ENCODE measurements at regions of chr13 and their contacts with region 1.

Region 1: GRCh38 chr13:40682449-40683240 is 16.2 kb upstream of the FOXO1 start:
- DNase-seq: no peak
- H3K4me3 Mint-ChIP-seq: no peak overlapping the region
- H3K27ac Mint-ChIP-seq: no peak overlapping the region
- H3K4me1 Mint-ChIP-seq: peaks cover 12% of the 10 kb centered on the region
- H3K27me3 Mint-ChIP-seq: no peaks in the 10 kb centered on the region

Region 2: DNA sequence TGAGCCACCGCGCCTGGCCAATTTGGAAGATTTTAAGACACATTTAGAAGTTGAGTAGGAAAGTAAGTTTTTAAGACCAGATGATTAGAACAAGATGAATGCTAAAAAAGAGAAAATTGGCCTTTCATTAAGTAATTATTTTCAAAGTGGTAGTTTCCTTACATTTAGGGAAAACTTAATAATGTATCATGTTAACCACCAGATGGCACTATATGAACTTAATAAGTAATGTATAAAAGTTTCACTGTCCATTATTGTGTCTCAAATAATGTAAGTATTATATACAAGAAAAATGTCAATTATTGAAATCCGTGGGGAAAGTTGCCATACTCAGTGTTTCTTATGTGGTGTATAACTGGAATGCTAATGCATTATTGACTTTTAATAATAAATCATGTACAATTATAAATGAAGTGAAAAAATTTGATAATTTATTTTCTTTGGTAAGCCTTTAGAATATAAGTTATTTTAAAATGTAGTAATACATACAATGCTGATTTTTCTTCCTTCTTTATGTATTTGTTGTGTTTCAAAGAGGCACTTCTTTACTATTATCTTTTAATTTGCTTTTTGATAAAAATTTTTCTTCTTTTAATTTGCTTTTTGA is 998.0 kb before region 1 on chr13:
- CTCF ChIA-PET with region 1: interaction called, 7 read pairs
- intact Hi-C with region 1: loop called (anchors 1 kb)
- DNase-seq: no peak
- H3K4me3 Mint-ChIP-seq: no peak overlapping the region
- H3K27ac Mint-ChIP-seq: no peak overlapping the region
- H3K4me1 Mint-ChIP-seq: peaks cover 16% of the 10 kb centered on the region
- H3K27me3 Mint-ChIP-seq: no peaks in the 10 kb centered on the region

Region 3: GRCh38 chr13:39783050-39783449 is 899.6 kb before region 1 on chr13:
- CTCF ChIA-PET with region 1: interaction called, 14 read pairs
- intact Hi-C with region 1: no loop called
- DNase-seq: no peak
- H3K4me3 Mint-ChIP-seq: no peak overlapping the region
- H3K27ac Mint-ChIP-seq: no peak overlapping the region
- H3K4me1 Mint-ChIP-seq: peaks cover 26% of the 10 kb centered on the region
- H3K27me3 Mint-ChIP-seq: no peaks in the 10 kb centered on the region

Region 4: DNA sequence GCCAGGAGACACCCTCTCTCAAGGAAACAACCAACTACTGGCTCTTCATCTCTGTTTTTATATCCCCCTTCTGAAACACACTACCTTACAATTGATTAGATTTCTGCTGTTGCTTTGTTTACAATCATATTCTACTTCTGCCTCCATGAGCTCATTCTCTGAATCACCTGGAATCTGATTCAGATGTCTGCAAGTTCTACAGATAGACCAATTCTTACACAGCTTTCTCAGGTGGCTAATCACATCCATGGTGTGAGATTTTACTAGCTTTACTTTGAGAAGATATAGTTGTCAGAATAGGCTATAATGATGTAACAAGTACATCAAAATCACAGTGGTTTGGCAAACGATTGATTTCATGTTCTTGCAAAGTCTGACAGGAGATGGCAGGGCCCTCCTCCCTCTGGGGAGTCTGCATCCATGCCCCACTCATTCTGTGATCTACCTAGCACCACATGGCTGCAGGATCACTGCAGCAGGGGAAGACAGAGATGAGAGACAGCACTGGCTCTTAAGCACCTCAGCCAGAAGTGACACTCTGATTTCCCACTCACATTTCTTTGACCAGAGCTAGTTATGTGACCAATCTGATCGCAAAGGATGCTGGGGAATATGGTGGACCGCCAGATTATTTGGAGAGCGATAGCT is 259.9 kb before region 1 on chr13:
- CTCF ChIA-PET with region 1: interaction called, 4 read pairs
- intact Hi-C with region 1: loop called (anchors 5 kb)
- DNase-seq: peak; percentile 46
- H3K4me3 Mint-ChIP-seq: no peak overlapping the region
- H3K27ac Mint-ChIP-seq: no peak overlapping the region
- H3K4me1 Mint-ChIP-seq: peaks cover 26% of the 10 kb centered on the region
- H3K27me3 Mint-ChIP-seq: no peaks in the 10 kb centered on the region

Region 5: GRCh38 chr13:40798380-40798779 is 115.7 kb after region 1 on chr13:
- CTCF ChIA-PET with region 1: no interaction called
- intact Hi-C with region 1: no loop called
- DNase-seq: peak; percentile 19
- H3K4me3 Mint-ChIP-seq: no peak overlapping the region
- H3K27ac Mint-ChIP-seq: no peak overlapping the region
- H3K4me1 Mint-ChIP-seq: peaks cover 17% of the 10 kb centered on the region
- H3K27me3 Mint-ChIP-seq: no peaks in the 10 kb centered on the region

Region 6: GRCh38 chr13:41029629-41030028 is 347.0 kb after region 1 on chr13:
- CTCF ChIA-PET with region 1: no interaction called
- intact Hi-C with region 1: loop called (anchors 1 kb)
- DNase-seq: peak; percentile 56
- H3K4me3 Mint-ChIP-seq: no peak overlapping the region
- H3K27ac Mint-ChIP-seq: no peak overlapping the region
- H3K4me1 Mint-ChIP-seq: peaks cover 26% of the 10 kb centered on the region
- H3K27me3 Mint-ChIP-seq: no peaks in the 10 kb centered on the region